ENCODE measurements at regions of chr9 and their contacts with region 1.

Region 1: GRCh38 chr9:120936011-120936763 is 9.6 kb upstream of the TRAF1 start:
- DNase-seq: peak; percentile 68 to 98
- H3K4me3 ChIP-seq: peak overlapping the region; percentile 13 to 35
- H3K27ac ChIP-seq: peak overlapping the region; percentile 97 to 98
- H3K4me1 ChIP-seq: peaks cover 31 to 77% of the 10 kb centered on the region in 2 donors
- H3K27me3 ChIP-seq: no peaks in the 10 kb centered on the region
- CTCF ChIP-seq: peak; percentile 86 to 92 (median 89)

Region 2: GRCh38 chr9:120792898-120793765 is 143.1 kb before region 1 on chr9 and contains the start of gene FBXW2:
- intact Hi-C with region 1: loop called (anchors 1 kb)
- DNase-seq: peak; percentile 56 to 95
- H3K4me3 ChIP-seq: peak within 1 kb of the TSS; percentile 98 to 99
- H3K27ac ChIP-seq: peak within 1 kb of the TSS; percentile 88 to 95
- H3K4me1 ChIP-seq: peaks cover 7 to 31% of the 10 kb centered on the region in 2 donors
- H3K27me3 ChIP-seq: no peaks in the 10 kb centered on the region
- CTCF ChIP-seq: peak in 1 of 3 experiments; percentile 4
- total RNA-seq, gene FBXW2: 35.5 TPM

Region 3: GRCh38 chr9:120875954-120876841 is 60.0 kb before region 1 on chr9:
- intact Hi-C with region 1: loop called (anchors 1 kb)
- DNase-seq: peak; percentile 73 to 96
- H3K4me3 ChIP-seq: peak overlapping the region; percentile 80 to 91
- H3K27ac ChIP-seq: peak overlapping the region; percentile 96 to 99
- H3K4me1 ChIP-seq: peaks cover 4 to 11% of the 10 kb centered on the region in 2 donors
- H3K27me3 ChIP-seq: no peaks in the 10 kb centered on the region
- CTCF ChIP-seq: no peak

Region 4: DNA sequence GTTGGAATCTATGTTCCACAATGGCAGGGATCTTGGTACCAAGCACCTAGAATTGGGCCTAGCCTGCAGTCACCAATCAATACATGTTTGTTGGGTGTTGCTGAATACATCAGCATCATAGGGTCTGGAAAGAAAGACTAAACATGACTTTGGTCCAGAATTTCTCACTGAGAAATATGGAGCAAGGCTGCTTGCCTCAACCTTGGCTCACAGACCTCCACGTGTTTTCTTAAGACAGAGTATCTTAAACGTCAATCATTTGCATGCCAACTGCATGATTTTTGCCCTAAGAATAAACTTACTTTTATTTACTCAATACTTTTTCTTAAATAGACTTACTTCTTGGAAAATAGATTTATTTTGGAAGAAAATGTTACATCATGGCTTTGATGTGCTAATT is 13.1 kb after region 1 on chr9:
- intact Hi-C with region 1: loop called (anchors 2 kb)
- DNase-seq: peak in 1 of 2 donors; percentile 82
- H3K4me3 ChIP-seq: no peak overlapping the region
- H3K27ac ChIP-seq: peak overlapping the region; percentile 82 to 84
- H3K4me1 ChIP-seq: peaks cover 10 to 36% of the 10 kb centered on the region in 2 donors
- H3K27me3 ChIP-seq: no peaks in the 10 kb centered on the region
- CTCF ChIP-seq: no peak

Region 5: DNA sequence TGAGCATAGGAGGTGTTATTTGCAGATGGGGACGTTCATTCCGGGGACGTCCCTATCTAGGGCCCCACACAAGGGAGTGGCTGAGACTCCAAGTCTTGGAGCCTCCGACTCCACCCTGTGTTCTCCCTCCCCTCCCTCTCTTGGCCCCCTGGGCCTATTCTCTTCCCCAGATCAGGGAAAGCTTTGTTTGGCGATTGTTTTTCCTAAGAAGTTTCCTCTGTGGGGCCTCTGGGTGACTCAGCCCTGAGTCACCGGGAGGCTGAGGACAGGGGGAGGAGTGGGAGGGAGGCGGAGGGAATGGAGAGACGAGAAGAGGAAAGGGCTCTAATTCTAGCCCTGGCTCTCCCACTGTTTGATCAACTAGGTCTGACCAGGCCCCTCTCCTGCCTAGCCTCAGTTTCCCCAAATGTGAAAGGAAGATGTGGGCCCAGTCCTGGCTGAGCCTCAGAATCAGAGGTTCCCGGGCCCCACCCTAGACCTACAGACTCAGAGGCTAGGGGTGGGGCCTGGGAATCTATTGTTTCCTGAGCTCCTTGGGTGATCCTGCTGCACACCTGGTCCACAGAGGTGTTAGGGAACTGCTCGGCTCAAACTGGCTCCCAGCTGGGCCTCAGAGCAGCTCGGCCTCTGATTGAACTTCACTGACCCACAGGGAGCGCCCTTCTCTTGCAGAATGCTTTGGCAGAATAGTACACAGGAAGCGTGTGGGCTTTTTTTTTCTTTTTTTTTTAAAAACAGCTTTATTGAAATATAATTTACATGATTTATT is 351.0 kb after region 1 on chr9:
- intact Hi-C with region 1: loop called (anchors 10 kb)
- DNase-seq: peak; percentile 56 to 95
- H3K4me3 ChIP-seq: peak overlapping the region; percentile 24 to 38
- H3K27ac ChIP-seq: peak overlapping the region; percentile 98 to 99
- H3K4me1 ChIP-seq: peaks cover 66 to 91% of the 10 kb centered on the region in 2 donors
- H3K27me3 ChIP-seq: no peaks in the 10 kb centered on the region
- CTCF ChIP-seq: peak in 2 of 3 experiments; percentile 28 to 29

Measured in ascending aorta (tissue), 2 donors.